ENCODE measurements at regions of chr2 and their contacts with region 1.

Region 1: DNA sequence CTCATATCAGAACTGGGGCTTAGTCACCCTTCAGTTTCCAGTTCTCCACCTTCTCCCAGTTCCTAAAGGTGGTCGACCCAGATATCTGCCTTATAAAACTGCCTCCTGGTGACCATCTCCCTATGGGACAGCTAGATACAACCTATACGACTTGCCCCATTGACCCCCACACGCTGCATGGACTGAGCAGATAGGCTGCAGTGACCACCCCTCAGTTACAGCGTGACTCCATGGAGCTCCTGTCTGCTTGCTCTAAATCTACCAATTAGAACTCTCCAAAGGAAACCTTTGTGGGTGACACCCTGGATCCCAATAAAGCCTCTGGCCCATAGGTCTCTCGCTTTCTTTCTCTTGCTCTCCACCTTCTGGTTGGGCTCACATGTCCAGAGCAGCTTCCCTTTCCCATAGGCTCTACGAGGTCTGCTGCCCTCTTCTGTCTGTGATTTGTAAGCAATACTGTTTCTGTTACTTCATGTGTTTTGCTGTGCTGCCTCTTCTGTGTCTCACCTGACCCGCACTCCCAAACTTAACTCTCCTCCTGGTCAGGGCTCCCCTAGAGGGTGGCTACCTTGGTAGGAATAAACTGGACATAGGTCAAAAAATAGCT is 971.3 kb upstream of the FAM98A start:
- DNase-seq: no peak
- H3K4me3 ChIP-seq: no peak overlapping the region
- H3K27ac ChIP-seq: no peak overlapping the region
- H3K4me1 ChIP-seq: no peaks in the 10 kb centered on the region
- H3K27me3 ChIP-seq: no peaks in the 10 kb centered on the region
- CTCF ChIP-seq: no peak
- EP300 ChIP-seq: no peak
- POLR2A ChIP-seq: no peak

Region 2: GRCh38 chr2:34523958-34524514 is 46.3 kb before region 1 on chr2:
- intact Hi-C with region 1: no loop called
- DNase-seq: no peak
- H3K4me3 ChIP-seq: no peak overlapping the region
- H3K27ac ChIP-seq: no peak overlapping the region
- H3K4me1 ChIP-seq: no peaks in the 10 kb centered on the region
- H3K27me3 ChIP-seq: no peaks in the 10 kb centered on the region
- CTCF ChIP-seq: no peak
- EP300 ChIP-seq: no peak
- POLR2A ChIP-seq: no peak

Region 3: DNA sequence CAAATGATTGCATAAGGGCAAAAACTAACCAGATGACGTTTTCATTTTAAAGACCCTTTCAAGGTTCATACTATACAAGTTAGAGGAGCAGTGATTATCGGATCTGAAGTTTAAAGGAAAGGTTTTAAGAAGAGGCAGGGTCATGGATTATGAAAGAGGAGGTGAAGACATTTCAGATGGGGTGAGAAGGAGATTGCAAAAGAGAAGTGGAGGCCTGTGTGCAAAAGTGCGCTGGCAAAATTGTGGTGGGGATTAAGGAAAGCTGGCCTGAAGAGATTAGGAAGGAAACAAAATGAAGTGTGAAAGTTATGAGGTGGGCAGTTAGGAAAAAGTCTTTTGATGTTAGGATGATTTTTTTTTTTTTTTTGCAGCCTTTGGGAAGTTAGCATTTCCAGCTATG is 35.6 kb before region 1 on chr2:
- intact Hi-C with region 1: loop called in 1 of 4 experiments (anchors 5 kb)
- DNase-seq: no peak
- H3K4me3 ChIP-seq: no peak overlapping the region
- H3K27ac ChIP-seq: no peak overlapping the region
- H3K4me1 ChIP-seq: no peaks in the 10 kb centered on the region
- H3K27me3 ChIP-seq: no peaks in the 10 kb centered on the region
- CTCF ChIP-seq: no peak
- EP300 ChIP-seq: no peak
- POLR2A ChIP-seq: no peak

Region 4: DNA sequence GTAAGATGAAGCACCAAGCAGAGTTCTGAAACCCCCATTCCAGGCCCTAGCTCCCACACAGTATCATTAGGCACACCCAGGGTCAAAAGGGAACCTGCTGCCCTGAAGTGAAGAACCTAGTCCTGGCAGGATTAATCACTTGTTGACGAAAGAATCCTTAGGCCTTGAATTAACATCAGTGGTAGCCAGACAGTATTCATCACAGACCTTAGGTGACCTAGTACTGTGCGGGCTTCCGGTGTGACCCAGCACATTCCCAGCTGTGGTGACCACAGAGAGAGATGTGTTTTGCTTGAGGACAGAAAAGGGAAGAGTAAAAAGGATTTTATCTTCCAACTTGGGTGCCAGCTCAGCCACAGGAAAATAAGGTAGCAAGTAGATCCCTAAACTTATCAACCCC is 100.1 kb after region 1 on chr2:
- intact Hi-C with region 1: no loop called
- DNase-seq: no peak
- H3K4me3 ChIP-seq: no peak overlapping the region
- H3K27ac ChIP-seq: no peak overlapping the region
- H3K4me1 ChIP-seq: no peaks in the 10 kb centered on the region
- H3K27me3 ChIP-seq: no peaks in the 10 kb centered on the region
- CTCF ChIP-seq: no peak
- EP300 ChIP-seq: no peak
- POLR2A ChIP-seq: no peak